ENCODE measurements at regions of chr9 and their contacts with region 1.

Region 1: DNA sequence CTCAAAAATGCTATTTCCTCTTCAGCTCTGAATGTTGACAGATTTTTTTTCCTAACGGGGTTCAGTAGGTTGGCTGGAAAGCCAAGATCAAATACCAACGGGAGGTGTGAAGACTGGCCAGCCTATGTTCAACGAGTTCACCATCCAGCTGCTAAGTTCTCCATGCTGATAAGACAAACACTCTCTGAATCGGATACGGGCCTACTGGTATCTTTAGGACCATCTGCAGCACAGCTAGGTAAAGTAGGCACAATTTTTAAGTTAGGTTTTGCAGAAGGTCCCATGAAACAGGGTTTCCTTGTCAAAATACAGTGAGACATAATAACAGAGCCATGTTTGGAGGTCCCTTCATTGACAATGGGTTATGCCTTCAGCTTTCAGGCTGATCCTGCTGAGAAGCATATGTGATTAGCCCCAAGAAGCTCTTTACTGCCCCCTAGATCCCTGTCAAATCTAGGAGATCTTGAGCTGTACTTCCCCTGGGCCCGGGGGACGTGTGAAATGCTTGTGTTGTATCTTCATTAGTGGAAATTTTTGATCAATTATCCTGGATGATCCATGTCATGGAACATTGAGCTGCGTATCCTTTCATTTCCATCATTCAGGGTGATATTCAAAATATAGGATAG is 60.6 kb downstream of the PGM5 start:
- DNase-seq: peak; percentile 6 to 32 (median 16)
- ATAC-seq: peak; percentile 75
- H3K4me3 ChIP-seq: no peak overlapping the region
- H3K27ac ChIP-seq: no peak overlapping the region
- H3K4me1 ChIP-seq: no peaks in the 10 kb centered on the region
- H3K27me3 ChIP-seq: peaks cover 0 to 5% of the 10 kb centered on the region in 2 experiments; a peak in 2 of 5 replicates
- CTCF ChIP-seq: peak in 2 of 3 experiments; percentile 36 to 38; a peak in 3 of 6 replicates
- EP300 ChIP-seq: no peak
- POLR2A ChIP-seq: no peak
- RAD21 ChIP-seq: peak in 1 of 2 experiments; percentile 23; a peak in 1 of 4 replicates

Region 2: DNA sequence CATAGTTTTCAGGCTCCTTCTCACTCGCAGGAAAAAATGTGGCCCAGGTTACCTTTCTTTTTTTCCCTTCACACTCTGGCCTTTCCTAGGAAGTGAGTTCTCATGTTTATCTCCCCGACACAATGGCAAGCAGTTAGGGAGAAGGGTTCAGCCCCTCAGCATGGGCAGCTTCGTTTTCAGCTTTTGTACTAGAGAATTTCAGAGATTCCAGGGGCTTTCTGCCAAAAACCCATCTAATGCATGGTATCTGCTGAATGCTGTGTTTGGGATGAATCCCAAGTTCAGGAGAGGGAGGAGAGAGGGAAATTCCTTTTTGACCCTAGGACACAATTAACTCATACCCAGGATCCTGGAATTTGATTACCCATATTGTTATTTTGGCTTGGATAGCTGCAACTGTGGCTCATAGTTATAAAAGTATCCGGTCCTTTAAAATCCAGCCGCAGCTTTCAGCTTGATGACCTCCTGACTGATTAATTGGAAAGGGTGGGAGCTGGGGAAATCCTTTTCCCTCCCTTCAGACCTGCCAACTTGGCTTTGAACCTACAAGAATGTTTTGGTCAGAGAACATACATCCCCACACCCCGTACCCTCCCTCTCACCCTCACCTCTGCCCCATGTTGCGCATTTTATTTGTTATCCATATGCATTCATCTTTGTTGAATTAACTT is 45.2 kb after region 1 on chr9:
- CTCF ChIA-PET with region 1: no interaction called
- POLR2A ChIA-PET with region 1: no interaction called
- in situ Hi-C with region 1: no loop called
- intact Hi-C with region 1: loop called (anchors 10 kb)
- DNase-seq: no peak
- ATAC-seq: no peak
- H3K4me3 ChIP-seq: no peak overlapping the region
- H3K27ac ChIP-seq: no peak overlapping the region
- H3K4me1 ChIP-seq: no peaks in the 10 kb centered on the region
- H3K27me3 ChIP-seq: no peaks in the 10 kb centered on the region; a peak in 1 of 5 replicates
- CTCF ChIP-seq: no peak
- EP300 ChIP-seq: no peak
- POLR2A ChIP-seq: no peak
- RAD21 ChIP-seq: no peak